ENCODE measurements at regions of chr10 and their contacts with region 1.

Region 1: DNA sequence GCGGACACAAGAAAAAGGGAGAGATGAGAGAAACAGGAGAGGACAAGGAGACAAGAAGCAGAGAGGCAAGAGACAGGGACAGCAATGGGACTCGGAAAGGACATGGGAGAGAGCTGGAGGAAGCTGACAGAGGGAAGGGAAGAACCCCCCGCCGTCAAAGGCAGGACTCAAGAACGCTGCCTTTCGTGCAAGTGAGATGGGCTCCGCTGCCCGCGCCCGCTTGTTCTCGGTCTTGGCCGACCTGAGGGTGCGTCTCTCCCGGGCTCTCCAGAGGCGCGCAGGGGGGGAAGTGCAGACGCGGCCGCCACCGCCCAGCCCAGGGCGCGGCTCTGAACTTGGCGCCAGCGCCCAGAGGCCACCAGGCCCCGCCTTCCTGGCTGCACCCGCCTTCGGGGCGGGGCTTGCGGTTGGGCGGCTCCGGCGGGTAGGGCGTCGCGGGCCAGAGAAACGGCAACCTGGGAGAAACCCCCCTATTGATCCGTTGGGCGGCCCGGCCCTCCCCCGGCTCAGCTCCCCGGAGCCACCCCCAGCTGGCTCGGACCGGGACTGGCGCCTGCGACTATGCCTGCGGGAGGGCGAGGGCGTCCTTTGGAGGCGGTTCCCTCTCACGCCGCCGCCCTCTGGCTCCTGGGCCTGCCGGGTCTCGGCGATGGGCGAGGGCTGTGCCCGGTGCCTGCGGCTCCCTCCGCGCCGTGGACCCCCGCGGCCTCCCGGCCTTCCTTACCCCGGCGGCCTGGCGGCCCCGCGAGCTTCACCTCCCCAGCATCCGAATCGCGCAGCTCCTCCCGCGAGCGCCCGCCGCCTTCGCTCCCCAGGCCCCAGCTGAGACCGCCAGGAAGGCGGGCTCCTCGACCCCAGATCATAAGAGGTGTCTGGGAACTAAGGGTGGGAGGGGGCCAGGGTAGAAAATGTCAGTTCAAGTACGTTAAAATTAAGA is 2.2 kb upstream of the ANTXRL start:
- DNase-seq: peak; percentile 52 to 62
- ATAC-seq: peak; percentile 91 to 92
- H3K4me3 ChIP-seq: peak overlapping the region; percentile 61 to 94 (median 86)
- H3K27ac ChIP-seq: peak overlapping the region; percentile 34 to 69 (median 64)
- H3K4me1 ChIP-seq: peaks cover 3 to 4% of the 10 kb centered on the region in 2 donors
- H3K27me3 ChIP-seq: no peaks in the 10 kb centered on the region
- CTCF ChIP-seq: no peak
- POLR2A ChIP-seq: peak; percentile 21 to 32

Region 2: DNA sequence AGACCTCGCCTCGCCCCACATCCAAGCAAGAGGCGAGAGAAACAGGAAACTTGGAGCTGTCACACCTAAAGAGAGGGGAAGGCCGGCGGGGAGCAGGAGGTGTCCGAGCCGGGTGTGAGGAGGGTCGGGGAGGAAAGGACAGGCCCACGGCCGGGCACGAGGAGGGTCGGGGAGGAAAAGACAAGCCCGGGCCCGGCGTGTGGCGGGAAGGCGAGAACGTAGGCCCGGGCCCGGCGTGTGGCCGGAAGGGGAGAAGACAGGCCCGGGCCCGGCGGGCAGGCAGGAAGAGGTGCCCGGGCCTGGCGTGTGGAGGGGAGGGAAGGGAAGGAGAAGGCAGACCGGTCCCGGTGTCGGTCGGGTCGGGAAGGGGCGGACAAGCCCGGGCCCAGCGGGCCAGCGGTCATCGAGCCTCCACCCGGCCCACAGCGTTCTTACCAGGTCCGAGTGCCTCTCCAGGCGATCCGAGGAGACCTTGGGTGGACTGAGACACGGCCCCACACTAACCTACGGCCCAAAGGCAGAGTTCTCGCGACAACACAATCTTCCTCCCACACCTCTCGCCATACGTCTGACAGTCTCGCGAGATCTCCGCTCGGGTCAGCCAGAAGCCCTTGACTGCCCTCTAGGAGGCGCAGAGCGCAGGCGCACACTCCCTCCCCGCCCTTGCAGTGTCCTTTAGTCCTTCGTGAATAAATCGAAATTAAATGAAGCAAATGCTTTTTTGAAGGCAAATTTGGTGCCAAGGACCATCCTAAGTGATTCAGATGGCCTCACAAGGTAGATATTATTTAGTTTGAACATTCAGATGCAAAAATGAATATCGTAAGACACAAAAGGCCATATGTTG is 254.2 kb before region 1 on chr10 and contains the start of gene NCOA4:
- in situ Hi-C with region 1: no loop called
- intact Hi-C with region 1: loop called (anchors 5 kb)
- DNase-seq: peak; percentile 96 to 97
- ATAC-seq: peak; percentile 99 to 100
- H3K4me3 ChIP-seq: peak within 1 kb of the TSS; percentile 75 to 99 (median 89)
- H3K27ac ChIP-seq: peak within 1 kb of the TSS; percentile 90 to 98 (median 91)
- H3K4me1 ChIP-seq: peaks cover 44 to 45% of the 10 kb centered on the region in 2 donors
- H3K27me3 ChIP-seq: no peaks in the 10 kb centered on the region
- CTCF ChIP-seq: peak; percentile 6 to 79 (median 67)
- POLR2A ChIP-seq: peak; percentile 56 to 73
- total RNA-seq, gene NCOA4: 139 to 173 (median 157) TPM

Region 3: DNA sequence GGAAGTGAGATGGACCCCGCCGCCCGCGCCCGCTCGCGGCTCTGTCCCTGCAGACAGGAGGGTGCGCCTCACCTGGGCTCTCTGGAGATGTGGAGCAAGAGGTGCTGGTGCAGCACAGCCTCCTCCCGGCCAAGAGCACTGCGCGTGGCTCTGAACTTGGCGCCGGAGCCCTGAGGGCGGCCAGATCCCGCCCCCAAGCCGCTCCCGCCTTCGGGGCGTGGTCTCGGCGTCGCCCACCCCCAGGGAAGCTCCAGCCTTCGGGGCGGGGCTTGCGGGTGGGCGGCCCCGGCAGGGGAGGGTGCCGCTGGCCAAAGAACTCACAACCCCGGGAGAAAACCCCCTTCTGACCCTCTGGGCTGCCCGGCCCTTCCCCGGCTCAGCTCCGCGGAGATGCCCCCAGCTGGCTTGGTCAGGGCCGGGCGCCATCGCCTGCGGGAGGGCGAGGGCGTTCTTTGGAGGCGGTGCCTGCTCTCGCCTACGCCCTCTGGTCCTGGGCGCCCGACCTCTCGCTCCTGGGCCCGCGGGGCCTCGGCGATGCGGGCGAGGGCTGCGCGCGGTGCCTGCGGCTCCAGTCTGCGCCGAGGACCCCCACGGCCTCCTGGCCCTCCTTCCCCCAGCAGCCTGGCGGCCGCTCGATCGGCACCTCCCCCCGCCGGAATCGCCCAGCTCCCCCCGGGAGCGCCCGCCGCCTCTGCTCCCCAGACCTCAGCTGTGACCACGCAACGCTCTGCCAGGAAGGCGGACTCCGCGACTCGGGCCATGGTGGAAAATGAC is 1099.8 kb after region 1 on chr10 and contains the start of gene ZNF488:
- in situ Hi-C with region 1: loop called in 3 of 4 experiments (anchors 5 to 25 kb)
- intact Hi-C with region 1: no loop called
- DNase-seq: peak; percentile 71 to 81
- ATAC-seq: peak; percentile 93 to 95
- H3K4me3 ChIP-seq: peak within 1 kb of the TSS; percentile 70 to 93 (median 79)
- H3K27ac ChIP-seq: peak within 1 kb of the TSS; percentile 73 to 83 (median 82)
- H3K4me1 ChIP-seq: peaks cover 10 to 17% of the 10 kb centered on the region in 2 donors
- H3K27me3 ChIP-seq: no peaks in the 10 kb centered on the region
- CTCF ChIP-seq: no peak
- POLR2A ChIP-seq: peak in 1 of 2 donors; percentile 23
- total RNA-seq, gene ZNF488: not detected